PC-3 (cell line): ENCODE measurements at regions of chr20 and their contacts with region 1.

Region 1: GRCh38 chr20:7850775-7851490 is 89.3 kb downstream of the HAO1 start:
- DNase-seq: peak; percentile 97
- ATAC-seq: peak; percentile 80
- H3K4me3 ChIP-seq: no peak overlapping the region
- H3K27ac ChIP-seq: peak overlapping the region; percentile 96
- H3K4me1 ChIP-seq: peaks cover 68% of the 10 kb centered on the region
- H3K27me3 ChIP-seq: no peaks in the 10 kb centered on the region
- CTCF ChIP-seq: no peak

Region 2: DNA sequence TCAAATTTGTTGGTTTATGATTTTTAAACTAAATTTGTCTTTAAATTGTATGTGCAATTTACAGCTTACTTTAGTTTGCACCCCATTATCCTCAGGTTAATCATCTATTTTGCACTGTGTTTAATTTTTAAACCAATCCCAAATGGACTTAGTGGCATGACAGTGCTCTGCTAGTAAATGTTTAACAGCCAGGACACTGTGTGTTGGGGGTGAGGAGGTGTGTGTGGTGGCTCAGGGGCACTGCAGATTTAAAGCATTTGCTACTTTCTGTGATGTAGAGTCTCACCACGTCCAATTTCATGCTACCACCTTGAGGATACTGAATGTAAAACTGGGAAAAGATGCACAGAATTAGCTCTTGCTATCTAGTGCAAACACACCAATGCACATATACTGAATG is 136.4 kb before region 1 on chr20:
- CTCF ChIA-PET with region 1: no interaction called
- POLR2A ChIA-PET with region 1: no interaction called
- intact Hi-C with region 1: loop called (anchors 5 kb)
- DNase-seq: no peak
- ATAC-seq: no peak
- H3K4me3 ChIP-seq: no peak overlapping the region
- H3K27ac ChIP-seq: no peak overlapping the region
- H3K4me1 ChIP-seq: peaks cover 33% of the 10 kb centered on the region
- H3K27me3 ChIP-seq: no peaks in the 10 kb centered on the region
- CTCF ChIP-seq: 0 out of 2 replicates have a peak, but pooled peaks have one; percentile 9